ENCODE measurements at regions of chr7 and their contacts with region 1.

Region 1: GRCh38 chr7:74569501-74570075 is 87.9 kb upstream of the GTF2I start:
- DNase-seq: no peak
- ATAC-seq: no peak
- H3K4me3 ChIP-seq: no peak overlapping the region
- H3K27ac ChIP-seq: no peak overlapping the region
- H3K4me1 ChIP-seq: no peaks in the 10 kb centered on the region
- H3K27me3 ChIP-seq: no peaks in the 10 kb centered on the region
- CTCF ChIP-seq: no peak

Region 2: DNA sequence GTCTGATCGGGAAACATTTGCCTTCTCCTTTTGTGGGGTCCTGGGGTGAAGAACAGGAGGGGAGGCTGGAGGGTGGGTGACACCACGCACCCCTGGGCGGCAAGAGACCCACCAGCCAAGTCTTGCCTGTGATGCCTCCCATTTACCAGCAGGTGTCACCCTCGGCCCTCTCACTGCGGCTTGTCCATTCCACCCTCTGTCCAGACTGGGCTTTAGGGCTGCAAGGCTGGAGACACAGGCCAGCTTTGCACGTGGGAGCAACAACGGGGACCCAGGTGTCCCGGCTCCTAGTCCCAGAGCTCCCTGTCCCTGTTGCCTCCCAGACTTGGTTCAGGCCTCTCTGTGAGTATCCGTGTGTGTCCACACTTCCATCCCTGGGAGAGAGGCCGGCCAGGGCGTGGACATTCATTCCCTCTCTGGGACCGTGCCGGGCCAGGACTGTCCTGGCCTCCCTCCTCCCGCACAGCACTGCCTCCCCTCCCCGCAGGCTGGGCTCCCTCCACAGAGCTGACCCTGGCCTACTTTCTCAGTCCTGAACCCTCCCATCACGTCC is 152.1 kb before region 1 on chr7:
- intact Hi-C with region 1: loop called (anchors 10 kb)
- DNase-seq: peak; percentile 81
- ATAC-seq: peak; percentile 98
- H3K4me3 ChIP-seq: no peak overlapping the region
- H3K27ac ChIP-seq: no peak overlapping the region
- H3K4me1 ChIP-seq: no peaks in the 10 kb centered on the region
- H3K27me3 ChIP-seq: peaks cover 4% of the 10 kb centered on the region
- CTCF ChIP-seq: peak; percentile 95

Region 3: DNA sequence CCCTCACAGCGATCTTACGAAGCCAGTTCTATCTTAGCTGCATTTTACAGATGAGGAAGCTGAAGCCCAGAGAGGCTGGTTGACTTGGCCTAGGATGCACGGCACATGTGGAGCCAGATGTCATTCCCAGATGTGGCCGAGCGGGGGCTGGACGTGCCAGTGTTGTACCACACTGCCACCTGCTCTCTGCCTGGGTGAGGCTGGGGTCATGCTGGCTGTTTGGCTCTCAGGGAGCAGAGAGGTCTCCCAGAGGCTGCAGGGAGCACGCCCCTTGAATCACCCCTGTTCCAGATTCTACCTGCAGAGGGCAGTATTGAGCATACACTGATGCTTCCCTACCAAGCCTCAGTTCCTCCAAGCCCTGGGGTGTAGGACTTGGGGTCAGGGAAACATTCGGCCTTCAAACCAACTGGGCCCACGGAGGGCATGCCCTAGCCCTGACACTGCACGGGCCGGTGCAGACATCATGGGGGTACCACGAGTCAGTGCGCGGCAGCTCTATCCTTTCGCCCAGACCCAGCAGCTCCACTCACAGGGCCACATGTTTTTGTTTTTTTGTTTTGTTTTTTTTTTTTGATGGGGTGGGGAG is 119.7 kb before region 1 on chr7:
- intact Hi-C with region 1: loop called (anchors 10 kb)
- DNase-seq: no peak
- ATAC-seq: peak; percentile 83
- H3K4me3 ChIP-seq: no peak overlapping the region
- H3K27ac ChIP-seq: no peak overlapping the region
- H3K4me1 ChIP-seq: peaks cover 11% of the 10 kb centered on the region
- H3K27me3 ChIP-seq: no peaks in the 10 kb centered on the region
- CTCF ChIP-seq: peak; percentile 87

Region 4: GRCh38 chr7:74656837-74657691 is 87.5 kb after region 1 on chr7:
- intact Hi-C with region 1: no loop called
- DNase-seq: peak; percentile 100
- ATAC-seq: peak; percentile 90
- H3K4me3 ChIP-seq: peak overlapping the region; percentile 97
- H3K27ac ChIP-seq: peak overlapping the region; percentile 97
- H3K4me1 ChIP-seq: peaks cover 40% of the 10 kb centered on the region
- H3K27me3 ChIP-seq: no peaks in the 10 kb centered on the region
- CTCF ChIP-seq: peak; percentile 28